Calu3 (cell line): ENCODE measurements at regions of chr3 and their contacts with region 1.

Region 1: DNA sequence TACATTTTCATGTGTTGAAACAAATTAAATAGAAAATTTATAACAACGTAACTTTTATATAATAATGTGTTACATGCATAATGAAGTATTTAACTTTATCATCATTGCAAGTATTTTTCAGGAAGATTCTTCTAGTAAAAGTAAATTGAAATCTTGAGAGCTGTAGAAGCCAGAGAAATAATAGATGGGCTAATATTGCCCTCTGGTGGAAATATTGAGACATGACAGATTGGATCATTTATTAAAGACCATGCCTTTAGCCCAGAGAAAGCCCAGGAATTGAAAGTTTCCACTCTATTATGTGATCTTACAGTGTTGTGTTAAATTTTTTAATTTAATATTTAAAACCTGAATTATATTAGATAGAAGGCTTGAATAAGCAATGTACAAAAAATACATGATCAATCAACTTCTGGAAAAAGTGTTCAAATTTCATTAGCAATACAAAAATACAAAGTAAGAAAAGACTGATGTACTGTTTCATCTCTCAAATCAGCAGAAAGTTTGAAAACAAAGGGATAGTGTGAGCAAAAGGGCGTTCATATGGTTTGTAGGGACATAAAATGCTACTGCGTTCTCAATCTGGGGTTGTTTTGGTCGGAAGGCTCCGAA is 52.7 kb upstream of the SPTSSB start:
- DNase-seq: no peak
- H3K4me3 Mint-ChIP-seq: no peak overlapping the region
- H3K27ac Mint-ChIP-seq: no peak overlapping the region
- H3K4me1 Mint-ChIP-seq: peaks cover 9% of the 10 kb centered on the region
- H3K27me3 Mint-ChIP-seq: no peaks in the 10 kb centered on the region
- CTCF ChIP-seq: peak; percentile 77

Region 2: GRCh38 chr3:160554980-160555379 is 869.0 kb before region 1 on chr3:
- CTCF ChIA-PET with region 1: no interaction called
- intact Hi-C with region 1: no loop called
- DNase-seq: no peak
- H3K4me3 Mint-ChIP-seq: no peak overlapping the region
- H3K27ac Mint-ChIP-seq: no peak overlapping the region
- H3K4me1 Mint-ChIP-seq: peaks cover 58% of the 10 kb centered on the region
- H3K27me3 Mint-ChIP-seq: no peaks in the 10 kb centered on the region
- CTCF ChIP-seq: no peak

Region 3: GRCh38 chr3:160577556-160578195 is 846.3 kb before region 1 on chr3:
- CTCF ChIA-PET with region 1: no interaction called
- intact Hi-C with region 1: loop called (anchors 5 kb)
- DNase-seq: peak; percentile 53
- H3K4me3 Mint-ChIP-seq: no peak overlapping the region
- H3K27ac Mint-ChIP-seq: no peak overlapping the region
- H3K4me1 Mint-ChIP-seq: peaks cover 10% of the 10 kb centered on the region
- H3K27me3 Mint-ChIP-seq: no peaks in the 10 kb centered on the region
- CTCF ChIP-seq: peak; percentile 38

Region 4: GRCh38 chr3:160707187-160707794 is 716.7 kb before region 1 on chr3:
- CTCF ChIA-PET with region 1: no interaction called
- intact Hi-C with region 1: loop called (anchors 5 kb)
- DNase-seq: peak; percentile 58
- H3K4me3 Mint-ChIP-seq: no peak overlapping the region
- H3K27ac Mint-ChIP-seq: no peak overlapping the region
- H3K4me1 Mint-ChIP-seq: no peaks in the 10 kb centered on the region
- H3K27me3 Mint-ChIP-seq: no peaks in the 10 kb centered on the region
- CTCF ChIP-seq: peak; percentile 62

Region 5: GRCh38 chr3:160956806-160957205 is 467.2 kb before region 1 on chr3:
- CTCF ChIA-PET with region 1: interaction called, 4 read pairs
- intact Hi-C with region 1: loop called (anchors 2 kb)
- DNase-seq: no peak
- H3K4me3 Mint-ChIP-seq: no peak overlapping the region
- H3K27ac Mint-ChIP-seq: no peak overlapping the region
- H3K4me1 Mint-ChIP-seq: no peaks in the 10 kb centered on the region
- H3K27me3 Mint-ChIP-seq: no peaks in the 10 kb centered on the region
- CTCF ChIP-seq: peak; percentile 52

Region 6: DNA sequence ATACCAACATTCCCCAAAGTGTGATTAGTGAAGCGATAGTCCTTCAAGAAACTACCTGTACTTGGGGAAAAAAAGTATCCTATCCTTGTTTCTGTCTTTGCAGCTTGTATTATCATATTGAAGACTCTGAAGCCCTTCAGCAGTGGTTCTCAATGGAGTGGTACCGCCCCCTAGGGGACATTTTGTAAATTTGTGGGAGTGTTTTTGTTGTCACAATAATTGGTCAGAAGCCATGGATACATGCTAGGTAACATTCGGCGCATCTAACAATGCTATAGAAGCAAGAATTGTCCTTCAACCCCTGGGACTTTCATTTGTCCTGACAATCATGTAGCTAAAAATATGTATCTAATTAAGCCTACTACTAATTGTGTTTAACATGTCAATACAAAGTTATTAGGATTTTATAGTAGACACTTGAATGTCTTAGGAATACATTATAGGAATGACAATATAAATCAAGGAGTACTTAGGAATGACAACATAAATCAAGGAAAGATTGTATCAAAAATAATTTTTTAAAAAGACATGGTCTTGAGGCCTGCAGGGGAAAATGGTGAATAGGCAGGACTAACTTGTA is 149.2 kb before region 1 on chr3:
- CTCF ChIA-PET with region 1: interaction called, 5 read pairs
- intact Hi-C with region 1: loop called (anchors 1 kb)
- DNase-seq: peak; percentile 63
- H3K4me3 Mint-ChIP-seq: no peak overlapping the region
- H3K27ac Mint-ChIP-seq: no peak overlapping the region
- H3K4me1 Mint-ChIP-seq: no peaks in the 10 kb centered on the region
- H3K27me3 Mint-ChIP-seq: no peaks in the 10 kb centered on the region
- CTCF ChIP-seq: peak; percentile 39